Activated CD8-positive, alpha-beta memory T cell treated with anti-CD3 and anti-CD28 coated beads, Interleukin-2, amount 10 ng/mL, durations not matched to agents 7 days and 5 days (primary cell): ENCODE measurements at regions of chr18 and their contacts with region 1.

Region 1: GRCh38 chr18:2985628-2986027 is 27.3 kb downstream of the LPIN2 start:
- DNase-seq: no peak
- ATAC-seq: no peak
- H3K4me3 Mint-ChIP-seq: no peak overlapping the region
- H3K27ac Mint-ChIP-seq: peak overlapping the region; percentile 11
- H3K4me1 Mint-ChIP-seq: peaks cover 74% of the 10 kb centered on the region
- H3K27me3 Mint-ChIP-seq: no peaks in the 10 kb centered on the region

Region 2: DNA sequence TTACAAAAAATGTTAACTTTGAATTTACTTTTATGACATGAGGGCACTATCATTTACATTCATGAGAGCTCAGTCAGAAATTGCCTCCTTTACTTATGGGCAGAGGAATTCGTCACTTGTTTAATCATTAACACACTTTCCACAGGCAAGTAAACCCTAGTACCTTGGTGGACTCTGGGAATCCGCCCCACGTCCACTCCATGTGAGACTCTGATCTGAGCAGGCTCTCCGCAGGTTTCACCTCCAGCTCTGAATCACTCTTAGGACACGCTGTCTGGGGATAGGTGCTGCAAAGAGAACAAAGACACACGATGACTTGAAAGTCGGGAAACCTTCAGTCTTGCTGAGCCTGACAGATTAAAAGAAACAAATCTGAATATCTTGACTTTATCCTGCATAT is 46.3 kb before region 1 on chr18:
- CTCF ChIA-PET with region 1: interaction called, 48 read pairs
- DNase-seq: no peak
- ATAC-seq: no peak
- H3K4me3 Mint-ChIP-seq: no peak overlapping the region
- H3K27ac Mint-ChIP-seq: no peak overlapping the region
- H3K4me1 Mint-ChIP-seq: peaks cover 27% of the 10 kb centered on the region
- H3K27me3 Mint-ChIP-seq: no peaks in the 10 kb centered on the region

Region 3: GRCh38 chr18:2948038-2948437 is 37.6 kb before region 1 on chr18:
- CTCF ChIA-PET with region 1: interaction called, 13 read pairs
- DNase-seq: no peak
- ATAC-seq: no peak
- H3K4me3 Mint-ChIP-seq: no peak overlapping the region
- H3K27ac Mint-ChIP-seq: no peak overlapping the region
- H3K4me1 Mint-ChIP-seq: peaks cover 42% of the 10 kb centered on the region
- H3K27me3 Mint-ChIP-seq: no peaks in the 10 kb centered on the region

Region 4: GRCh38 chr18:2958819-2959298 is 26.8 kb before region 1 on chr18:
- CTCF ChIA-PET with region 1: interaction called, 111 read pairs
- DNase-seq: peak; percentile 83
- ATAC-seq: peak; percentile 40
- H3K4me3 Mint-ChIP-seq: peak overlapping the region; percentile 50
- H3K27ac Mint-ChIP-seq: peak overlapping the region; percentile 100
- H3K4me1 Mint-ChIP-seq: peaks cover 88% of the 10 kb centered on the region
- H3K27me3 Mint-ChIP-seq: no peaks in the 10 kb centered on the region

Region 5: DNA sequence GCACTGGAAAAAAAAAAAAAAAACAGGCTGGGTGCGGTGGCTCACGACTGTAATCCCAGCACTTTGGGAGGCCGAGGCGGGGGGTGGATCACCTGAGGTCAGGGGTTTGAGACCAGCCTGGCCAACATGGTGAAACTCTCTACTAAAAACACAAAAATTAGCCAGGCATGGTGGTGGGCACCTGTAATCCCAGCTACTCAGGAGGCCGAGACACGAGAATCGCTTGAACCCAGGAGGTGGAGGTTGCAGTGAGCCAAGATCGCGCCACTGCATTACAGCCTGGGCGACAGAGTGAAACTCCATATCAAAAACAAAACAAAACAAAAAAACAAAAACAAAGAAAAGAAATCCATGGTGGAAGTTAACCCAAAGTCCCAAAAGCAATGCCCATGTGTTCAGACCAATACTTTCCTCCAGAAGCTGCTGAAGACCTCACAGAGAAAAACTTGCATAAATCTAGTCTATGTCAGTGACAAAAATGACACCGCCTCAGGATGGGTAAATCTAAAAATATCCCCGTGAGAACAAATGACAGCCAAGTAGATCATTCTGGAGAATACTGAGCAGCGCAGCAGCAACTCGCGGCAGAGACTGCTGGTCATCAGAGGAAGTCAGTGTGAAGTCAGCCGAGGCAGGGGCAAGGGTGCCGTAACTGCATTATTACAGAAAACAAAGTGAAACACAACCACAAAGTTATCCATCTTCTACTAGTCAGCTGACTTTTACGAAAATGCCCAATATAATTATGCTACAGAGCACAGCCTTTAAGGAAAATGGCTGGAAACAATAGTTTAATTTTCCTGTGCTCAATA is 13.7 kb before region 1 on chr18:
- CTCF ChIA-PET with region 1: interaction called, 21 read pairs
- DNase-seq: peak; percentile 91
- ATAC-seq: peak; percentile 77
- H3K4me3 Mint-ChIP-seq: peak overlapping the region; percentile 77
- H3K27ac Mint-ChIP-seq: peak overlapping the region; percentile 98
- H3K4me1 Mint-ChIP-seq: peaks cover 92% of the 10 kb centered on the region
- H3K27me3 Mint-ChIP-seq: no peaks in the 10 kb centered on the region

Region 6: DNA sequence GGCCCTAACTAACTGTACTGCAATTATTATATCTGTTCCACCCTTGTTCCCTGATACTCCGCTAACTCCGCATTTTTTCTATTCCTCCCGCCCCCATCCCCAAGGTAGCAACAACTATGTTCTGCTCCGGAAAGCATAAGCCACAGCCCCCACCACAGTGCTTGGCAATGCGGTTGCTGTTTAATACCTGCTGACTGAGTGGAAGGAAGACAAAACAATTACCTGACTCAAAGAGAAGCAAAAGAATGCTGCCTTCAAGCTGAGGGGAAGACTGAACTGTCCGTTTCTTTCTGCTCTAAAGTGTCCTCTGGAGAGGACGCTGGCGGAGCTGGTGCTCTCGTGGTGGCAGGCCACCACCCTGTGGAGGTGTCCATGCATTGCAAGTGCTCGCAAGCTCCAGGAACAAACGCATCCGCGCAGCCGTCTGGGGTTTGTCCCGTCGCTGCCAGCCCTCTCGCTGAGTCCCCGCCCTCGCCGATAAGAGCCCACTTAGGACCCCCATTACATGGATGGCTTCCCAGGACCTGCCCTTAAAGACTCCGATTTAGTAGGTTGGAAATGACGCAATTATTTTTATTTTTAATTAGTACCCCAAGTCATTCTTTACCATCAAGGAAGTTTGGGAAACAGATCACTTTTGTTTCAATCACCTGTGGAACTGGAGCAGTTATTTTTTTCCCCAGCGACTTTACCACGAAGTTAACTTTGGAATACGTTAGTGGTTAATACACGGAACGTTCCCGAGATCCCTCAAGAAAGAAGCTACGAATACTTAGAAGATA is 260.4 kb after region 1 on chr18:
- CTCF ChIA-PET with region 1: interaction called, 20 read pairs
- DNase-seq: peak; percentile 90
- ATAC-seq: peak; percentile 56
- H3K4me3 Mint-ChIP-seq: peak overlapping the region; percentile 92
- H3K27ac Mint-ChIP-seq: peak overlapping the region; percentile 99
- H3K4me1 Mint-ChIP-seq: peaks cover 24% of the 10 kb centered on the region
- H3K27me3 Mint-ChIP-seq: peaks cover 4% of the 10 kb centered on the region